Head of caudate nucleus (tissue), 42 donors: ENCODE measurements at regions of chr9 and their contacts with region 1.

Region 1: GRCh38 chr9:78035383-78035993 is 3.9 kb upstream of the GNAQ start:
- DNase-seq: peak in 39 of 42 donors; percentile 30 to 89 (median 66)

Region 2: DNA sequence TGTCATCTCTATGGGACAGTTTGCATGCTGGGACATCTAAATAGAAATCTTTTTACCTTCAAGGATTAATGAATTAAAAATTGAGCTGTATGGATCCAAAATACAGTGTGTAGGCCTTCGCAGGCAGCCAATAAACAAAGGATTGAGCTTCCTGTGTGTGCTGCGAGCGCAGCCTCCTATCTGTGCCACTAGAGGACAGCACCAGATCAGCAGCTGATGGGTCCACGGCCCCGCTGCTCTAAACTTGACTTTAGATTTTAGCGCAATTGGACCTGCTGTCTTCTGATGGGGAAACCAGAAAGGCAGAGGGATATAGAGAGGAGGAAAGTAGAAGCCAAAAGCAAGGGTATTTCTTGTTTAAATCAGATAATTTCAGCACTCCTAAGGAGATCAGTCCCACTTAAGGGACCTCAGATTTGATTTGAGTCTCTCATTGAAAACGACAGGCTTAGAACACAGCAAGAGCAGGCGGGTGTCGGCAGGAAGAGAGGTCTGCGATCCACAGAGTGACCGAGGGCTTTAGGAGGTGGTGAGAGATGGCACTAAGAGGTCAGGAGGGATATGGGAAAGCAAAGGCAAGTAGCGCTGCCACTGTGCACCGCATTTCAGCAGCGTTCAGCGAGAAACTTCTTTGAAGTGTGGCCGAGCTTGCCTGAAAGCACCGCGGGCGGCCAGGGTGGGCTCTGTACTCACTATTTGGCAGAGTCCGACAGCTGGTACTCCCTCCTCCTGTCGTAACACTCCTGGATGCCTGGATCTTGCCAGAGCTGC is 601.6 kb before region 1 on chr9:
- intact Hi-C with region 1: loop called (anchors 10 kb)
- DNase-seq: peak; percentile 62 to 90 (median 78)

Region 3: DNA sequence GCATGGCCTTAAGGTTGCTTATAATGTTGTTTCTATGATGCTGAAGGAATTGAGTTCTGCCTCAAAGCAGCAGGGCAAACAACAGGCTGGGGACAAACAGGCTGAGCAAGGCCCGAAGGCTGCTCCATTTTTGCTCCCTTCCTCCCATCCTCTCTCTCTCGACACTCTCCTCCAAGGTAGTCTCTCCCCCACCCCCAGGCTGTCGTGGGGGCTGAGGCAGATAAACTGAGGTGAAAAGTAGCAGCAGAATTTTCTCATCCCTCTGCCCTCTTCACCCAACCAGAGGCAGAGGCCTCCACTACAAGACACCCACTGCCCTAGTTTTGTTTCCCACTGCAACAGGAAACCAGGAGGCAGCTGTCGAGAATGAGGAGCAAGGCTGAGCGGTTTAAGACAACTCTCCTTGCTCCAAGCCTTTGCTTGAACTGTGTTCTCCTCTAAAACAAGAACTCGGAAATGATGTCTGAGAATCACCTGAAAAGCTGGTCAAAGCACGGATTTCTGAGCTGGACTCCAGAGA is 373.9 kb before region 1 on chr9:
- intact Hi-C with region 1: no loop called
- DNase-seq: no peak

Region 4: GRCh38 chr9:77841739-77842386 is 193.6 kb before region 1 on chr9:
- intact Hi-C with region 1: loop called (anchors 10 kb)
- DNase-seq: peak in 2 of 42 donors; percentile 28 to 46

Region 5: DNA sequence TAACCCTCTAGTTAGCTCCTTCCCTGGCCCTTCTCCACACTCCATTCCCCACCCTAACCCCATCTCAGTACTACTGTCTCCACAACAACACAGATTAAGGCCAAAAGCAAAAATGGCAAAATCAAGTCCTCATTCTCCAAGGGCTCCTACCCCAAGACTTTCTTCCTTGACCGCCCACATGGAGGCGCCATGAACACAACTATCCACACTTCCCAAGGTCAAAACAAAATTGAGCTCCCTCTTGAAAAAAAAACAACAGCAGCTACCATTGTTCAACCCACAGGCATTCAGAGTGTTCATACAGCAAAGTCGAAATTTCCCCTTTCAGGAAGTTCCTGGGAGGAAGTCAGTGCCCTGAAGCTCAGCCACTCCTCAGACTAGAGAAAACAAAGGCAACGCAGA is 58.3 kb before region 1 on chr9:
- intact Hi-C with region 1: loop called (anchors 2 kb)
- DNase-seq: peak in 41 of 42 donors; percentile 33 to 89 (median 71)

Region 6: GRCh38 chr9:78121488-78121887 is 86.0 kb after region 1 on chr9:
- intact Hi-C with region 1: loop called (anchors 2 kb)
- DNase-seq: peak; percentile 60 to 92 (median 82)

Region 7: DNA sequence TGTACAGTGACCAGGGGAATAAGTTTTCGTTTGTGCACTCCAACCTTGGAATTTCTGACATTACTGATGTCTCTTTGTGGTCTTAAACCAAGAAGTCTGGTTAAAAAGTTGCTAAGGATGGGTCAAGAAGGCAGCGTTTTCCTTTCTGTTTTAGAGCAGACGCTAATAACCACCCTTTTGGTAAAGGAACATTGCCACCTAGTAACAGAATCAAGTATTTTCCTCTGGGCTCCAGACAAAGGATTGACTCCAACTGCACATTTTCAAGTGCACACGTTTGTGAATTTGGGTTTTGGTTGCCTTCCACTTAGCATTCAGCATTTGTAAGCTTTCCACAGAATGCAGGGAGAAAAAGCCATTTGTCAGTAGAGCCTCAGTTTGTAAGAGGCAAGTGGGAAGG is 178.2 kb after region 1 on chr9:
- intact Hi-C with region 1: loop called (anchors 5 kb)
- DNase-seq: peak in 12 of 42 donors; percentile 11 to 71 (median 27)